Activated CD4-positive, alpha-beta T cell treated with anti-CD3 and anti-CD28 coated beads for 36 hours (primary cell): ENCODE measurements at regions of chr1 and their contacts with region 1.

Region 1: DNA sequence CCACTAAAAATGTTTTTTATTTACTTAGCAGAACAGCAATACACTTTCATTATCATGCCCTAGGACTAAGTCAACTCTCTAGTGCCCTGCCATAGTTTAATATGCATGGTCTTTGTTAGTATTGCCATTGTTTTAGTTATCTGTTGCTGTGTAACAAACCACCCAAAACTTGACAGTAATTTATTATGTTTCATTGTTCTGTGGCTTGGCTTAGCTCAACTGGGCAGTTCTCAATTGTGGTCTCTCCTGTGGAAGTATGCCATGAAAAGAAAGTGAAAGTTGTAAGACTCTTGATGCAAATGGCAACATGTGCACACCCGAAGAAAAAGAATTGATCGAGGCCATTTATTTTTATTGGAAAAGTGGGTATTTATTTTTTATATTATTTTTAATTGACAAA is 206.3 kb upstream of the KCTD3 start:
- DNase-seq: no peak
- ATAC-seq: no peak
- H3K4me3 Mint-ChIP-seq: no peak overlapping the region
- H3K27ac Mint-ChIP-seq: no peak overlapping the region
- H3K4me1 Mint-ChIP-seq: no peaks in the 10 kb centered on the region
- H3K27me3 Mint-ChIP-seq: no peaks in the 10 kb centered on the region

Region 2: GRCh38 chr1:215104283-215104682 is 256.5 kb before region 1 on chr1:
- CTCF ChIA-PET with region 1: no interaction called
- POLR2A ChIA-PET with region 1: no interaction called
- intact Hi-C with region 1: no loop called
- DNase-seq: no peak
- ATAC-seq: no peak
- H3K4me3 Mint-ChIP-seq: no peak overlapping the region
- H3K27ac Mint-ChIP-seq: no peak overlapping the region
- H3K4me1 Mint-ChIP-seq: no peaks in the 10 kb centered on the region
- H3K27me3 Mint-ChIP-seq: peaks cover 8% of the 10 kb centered on the region

Region 3: DNA sequence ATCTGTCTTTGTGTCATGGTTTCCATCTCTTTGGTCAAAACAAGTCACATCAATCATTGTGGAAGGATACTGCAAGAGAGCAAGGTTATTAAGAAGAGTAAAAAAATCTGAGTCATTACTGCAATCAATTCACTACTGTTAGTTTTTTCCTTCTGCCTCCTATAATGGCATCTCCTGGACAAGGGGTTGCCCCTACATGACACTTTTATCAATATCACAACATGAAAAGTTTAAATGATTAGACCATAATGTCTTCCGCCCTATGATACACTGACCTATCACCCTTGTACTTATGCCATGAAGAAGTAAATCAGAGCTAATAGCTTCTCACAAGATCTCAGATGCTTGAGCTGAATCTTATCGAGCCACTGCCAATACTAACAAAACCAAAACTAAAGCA is 54.3 kb before region 1 on chr1:
- CTCF ChIA-PET with region 1: no interaction called
- POLR2A ChIA-PET with region 1: no interaction called
- intact Hi-C with region 1: loop called in 1 of 2 experiments (anchors 5 kb)
- DNase-seq: no peak
- ATAC-seq: no peak
- H3K4me3 Mint-ChIP-seq: no peak overlapping the region
- H3K27ac Mint-ChIP-seq: no peak overlapping the region
- H3K4me1 Mint-ChIP-seq: no peaks in the 10 kb centered on the region
- H3K27me3 Mint-ChIP-seq: no peaks in the 10 kb centered on the region

Region 4: GRCh38 chr1:215418869-215419447 is 58.2 kb after region 1 on chr1:
- CTCF ChIA-PET with region 1: no interaction called
- POLR2A ChIA-PET with region 1: no interaction called
- intact Hi-C with region 1: no loop called
- DNase-seq: no peak
- ATAC-seq: no peak
- H3K4me3 Mint-ChIP-seq: no peak overlapping the region
- H3K27ac Mint-ChIP-seq: no peak overlapping the region
- H3K4me1 Mint-ChIP-seq: no peaks in the 10 kb centered on the region
- H3K27me3 Mint-ChIP-seq: peaks cover 6% of the 10 kb centered on the region

Region 5: GRCh38 chr1:215682232-215682631 is 321.5 kb after region 1 on chr1:
- CTCF ChIA-PET with region 1: no interaction called
- POLR2A ChIA-PET with region 1: no interaction called
- intact Hi-C with region 1: no loop called
- DNase-seq: no peak
- ATAC-seq: no peak
- H3K4me3 Mint-ChIP-seq: no peak overlapping the region
- H3K27ac Mint-ChIP-seq: no peak overlapping the region
- H3K4me1 Mint-ChIP-seq: no peaks in the 10 kb centered on the region
- H3K27me3 Mint-ChIP-seq: no peaks in the 10 kb centered on the region